ENCODE measurements at regions of chr10 and their contacts with region 1.

Region 1: DNA sequence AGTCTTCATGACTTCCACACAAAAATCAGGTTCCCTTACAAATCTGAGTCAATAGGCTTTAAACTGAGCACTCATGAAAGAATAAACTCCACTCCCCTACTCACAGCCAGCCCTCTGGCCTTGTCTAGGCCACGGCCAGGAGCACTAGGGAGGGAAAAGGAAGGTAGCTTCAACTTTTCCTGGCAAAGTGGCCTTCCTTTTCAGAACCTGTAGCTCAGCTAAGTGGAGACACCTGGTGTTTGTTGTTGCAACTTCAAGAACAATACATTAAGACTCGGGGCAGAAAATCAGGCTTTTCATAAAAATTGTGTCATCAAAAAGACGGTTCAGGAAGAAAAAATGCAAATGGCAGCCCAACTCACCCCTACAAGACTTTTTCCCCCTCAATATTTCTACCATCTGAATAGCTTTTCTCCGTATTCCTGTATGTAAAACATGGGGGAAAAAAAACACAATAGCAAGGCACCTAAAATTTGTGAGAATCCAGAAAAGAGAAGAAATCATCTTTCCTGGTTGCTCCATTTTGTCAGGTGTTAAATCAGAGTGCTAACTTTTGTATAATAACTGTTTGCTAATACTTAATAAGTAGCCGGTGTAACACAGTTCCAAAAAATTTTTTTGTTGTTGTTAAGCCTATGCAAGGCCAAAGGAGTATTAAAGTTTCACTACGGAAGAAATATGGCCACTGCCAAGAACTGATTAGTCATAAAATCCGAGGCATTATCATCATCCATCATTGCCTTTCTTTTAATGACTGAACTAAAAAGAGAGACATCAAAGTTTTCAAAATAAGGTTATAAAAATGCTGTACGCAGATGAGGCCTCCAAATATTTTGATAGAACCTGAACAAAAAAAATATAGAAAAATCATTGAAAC is 66.2 kb upstream of the ARID5B start:
- DNase-seq: no peak
- H3K4me3 ChIP-seq: no peak overlapping the region
- H3K27ac ChIP-seq: no peak overlapping the region
- H3K4me1 ChIP-seq: 0 out of 7 replicates have a peak, but pooled peaks cover 0 to 3% (median 0%) of the 10 kb centered on the region in 4 experiments
- H3K27me3 ChIP-seq: no peaks in the 10 kb centered on the region
- CTCF ChIP-seq: peak in 2 of 3 experiments; percentile 62 to 68; a peak in 3 of 4 replicates
- EP300 ChIP-seq: no peak
- POLR2A ChIP-seq: no peak
- RAD21 ChIP-seq: peak; percentile 76 to 81

Region 2: GRCh38 chr10:61733358-61733940 is 101.9 kb before region 1 on chr10:
- CTCF ChIA-PET with region 1: interaction called, 10 read pairs
- POLR2A ChIA-PET with region 1: no interaction called
- DNase-seq: no peak
- H3K4me3 ChIP-seq: no peak overlapping the region
- H3K27ac ChIP-seq: no peak overlapping the region
- H3K4me1 ChIP-seq: no peaks in the 10 kb centered on the region
- H3K27me3 ChIP-seq: no peaks in the 10 kb centered on the region
- CTCF ChIP-seq: peak in 2 of 3 experiments; percentile 46 to 61; a peak in 2 of 4 replicates
- EP300 ChIP-seq: no peak
- POLR2A ChIP-seq: no peak
- RAD21 ChIP-seq: peak; percentile 76 to 79

Region 3: GRCh38 chr10:61822781-61823230 is 12.5 kb before region 1 on chr10:
- CTCF ChIA-PET with region 1: interaction called, 19 read pairs
- POLR2A ChIA-PET with region 1: no interaction called
- DNase-seq: no peak
- H3K4me3 ChIP-seq: no peak overlapping the region
- H3K27ac ChIP-seq: no peak overlapping the region
- H3K4me1 ChIP-seq: no peaks in the 10 kb centered on the region
- H3K27me3 ChIP-seq: peaks cover 0 to 1% (median 0%) of the 10 kb centered on the region in 4 experiments; a peak in 4 of 7 replicates
- CTCF ChIP-seq: no peak
- EP300 ChIP-seq: no peak
- POLR2A ChIP-seq: no peak
- RAD21 ChIP-seq: no peak

Region 4: GRCh38 chr10:61896854-61897661 is 61.8 kb after region 1 on chr10:
- CTCF ChIA-PET with region 1: no interaction called
- POLR2A ChIA-PET with region 1: no interaction called
- DNase-seq: peak; percentile 68 to 79
- H3K4me3 ChIP-seq: peak overlapping the region; percentile 19 to 62 (median 53)
- H3K27ac ChIP-seq: no peak overlapping the region
- H3K4me1 ChIP-seq: peaks cover 0 to 15% (median 5%) of the 10 kb centered on the region in 4 experiments; a peak in 4 of 7 replicates
- H3K27me3 ChIP-seq: peaks cover 8 to 36% (median 32%) of the 10 kb centered on the region in 4 experiments
- CTCF ChIP-seq: peak; percentile 43 to 78 (median 69)
- EP300 ChIP-seq: no peak
- POLR2A ChIP-seq: no peak
- RAD21 ChIP-seq: peak; percentile 67 to 72

Measured in H1 (cell line).